Ascending aorta (tissue), 2 donors: ENCODE measurements at regions of chr2 and their contacts with region 1.

Region 1: GRCh38 chr2:182372661-182373060 is 54.2 kb downstream of the PDE1A start:
- DNase-seq: peak in 1 of 2 donors; percentile 85
- H3K4me3 ChIP-seq: no peak overlapping the region
- H3K27ac ChIP-seq: peak overlapping the region; percentile 82 to 91
- H3K4me1 ChIP-seq: peaks cover 0 to 36% of the 10 kb centered on the region in 2 donors
- H3K27me3 ChIP-seq: no peaks in the 10 kb centered on the region
- CTCF ChIP-seq: no peak

Region 2: GRCh38 chr2:182406221-182406620 is 33.6 kb after region 1 on chr2:
- intact Hi-C with region 1: loop called (anchors 5 kb)
- DNase-seq: no peak
- H3K4me3 ChIP-seq: no peak overlapping the region
- H3K27ac ChIP-seq: peak overlapping the region in 1 of 2 donors; percentile 4
- H3K4me1 ChIP-seq: peaks cover 0 to 11% of the 10 kb centered on the region in 2 donors
- H3K27me3 ChIP-seq: no peaks in the 10 kb centered on the region
- CTCF ChIP-seq: no peak

Region 3: DNA sequence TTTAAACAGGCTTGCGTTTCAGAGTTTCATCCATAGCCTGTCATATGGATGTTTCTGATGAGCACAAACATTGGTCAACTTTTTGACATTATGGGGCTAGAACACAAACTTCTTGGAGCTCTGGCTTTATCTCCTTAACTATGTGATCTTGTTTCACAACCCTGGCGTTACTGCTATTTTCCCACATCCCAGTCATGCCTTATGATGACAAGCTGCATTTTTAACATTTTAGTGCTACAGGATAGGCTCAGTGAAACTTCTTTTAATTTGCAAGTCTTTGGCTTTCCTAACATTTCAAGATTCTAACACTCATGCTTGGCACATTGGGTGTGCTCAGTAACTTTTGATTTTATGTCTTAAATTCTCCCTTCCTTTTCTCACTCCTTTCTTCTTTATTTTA is 75.2 kb after region 1 on chr2:
- intact Hi-C with region 1: loop called (anchors 5 kb)
- DNase-seq: peak in 1 of 2 donors; percentile 66
- H3K4me3 ChIP-seq: no peak overlapping the region
- H3K27ac ChIP-seq: peak overlapping the region; percentile 60 to 64
- H3K4me1 ChIP-seq: peaks cover 0 to 26% of the 10 kb centered on the region in 2 donors
- H3K27me3 ChIP-seq: no peaks in the 10 kb centered on the region
- CTCF ChIP-seq: no peak